ENCODE measurements at regions of chr15 and their contacts with region 1.

Region 1: GRCh38 chr15:82122746-82123400 is 77.1 kb upstream of the MEX3B start:
- DNase-seq: no peak
- ATAC-seq: no peak
- H3K4me3 Mint-ChIP-seq: no peak overlapping the region
- H3K27ac Mint-ChIP-seq: no peak overlapping the region
- H3K4me1 Mint-ChIP-seq: no peaks in the 10 kb centered on the region
- H3K27me3 Mint-ChIP-seq: no peaks in the 10 kb centered on the region
- CTCF ChIP-seq: no peak

Region 2: GRCh38 chr15:82139823-82140268 is 17.0 kb after region 1 on chr15:
- CTCF ChIA-PET with region 1: interaction called, 17 read pairs
- POLR2A ChIA-PET with region 1: no interaction called
- DNase-seq: no peak
- ATAC-seq: no peak
- H3K4me3 Mint-ChIP-seq: no peak overlapping the region
- H3K27ac Mint-ChIP-seq: no peak overlapping the region
- H3K4me1 Mint-ChIP-seq: no peaks in the 10 kb centered on the region
- H3K27me3 Mint-ChIP-seq: no peaks in the 10 kb centered on the region
- CTCF ChIP-seq: peak; percentile 51

Measured in WTC11 (cell line).